ENCODE measurements at regions of chr3 and their contacts with region 1.

Region 1: DNA sequence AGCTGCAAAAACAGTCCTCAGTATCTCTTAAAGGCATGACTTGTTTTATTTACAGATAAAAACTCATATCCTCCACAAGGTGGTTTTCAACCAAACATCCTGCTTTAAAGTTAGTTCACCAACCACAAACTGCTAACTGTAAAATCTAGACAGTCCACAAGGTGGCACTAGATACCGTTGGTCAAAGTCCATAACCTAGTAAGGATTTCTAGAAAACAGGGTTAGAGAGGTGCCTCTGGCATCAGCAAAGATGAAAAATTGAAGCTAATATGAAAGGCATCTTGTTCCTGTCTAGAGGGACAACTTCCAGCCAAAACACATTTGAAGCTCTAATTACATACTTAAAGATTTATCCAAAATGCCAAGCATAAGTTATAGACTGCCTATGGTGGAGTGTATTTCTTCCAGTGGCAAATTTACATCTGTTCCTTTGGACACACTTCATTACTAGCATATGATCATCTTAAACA is 56.0 kb downstream of the ZMAT3 start:
- DNase-seq: peak in 12 of 14 experiments; percentile 6 to 90 (median 58)
- ATAC-seq: peak; percentile 98
- H3K4me3 ChIP-seq: no peak overlapping the region
- H3K4me3 Mint-ChIP-seq: no peak overlapping the region
- H3K27ac ChIP-seq: no peak overlapping the region
- H3K27ac Mint-ChIP-seq: peak overlapping the region; percentile 31
- H3K4me1 ChIP-seq: peaks cover 4% of the 10 kb centered on the region
- H3K4me1 Mint-ChIP-seq: peaks cover 45% of the 10 kb centered on the region
- H3K27me3 ChIP-seq: no peaks in the 10 kb centered on the region
- H3K27me3 Mint-ChIP-seq: no peaks in the 10 kb centered on the region
- CTCF ChIP-seq: peak; percentile 88

Region 2: DNA sequence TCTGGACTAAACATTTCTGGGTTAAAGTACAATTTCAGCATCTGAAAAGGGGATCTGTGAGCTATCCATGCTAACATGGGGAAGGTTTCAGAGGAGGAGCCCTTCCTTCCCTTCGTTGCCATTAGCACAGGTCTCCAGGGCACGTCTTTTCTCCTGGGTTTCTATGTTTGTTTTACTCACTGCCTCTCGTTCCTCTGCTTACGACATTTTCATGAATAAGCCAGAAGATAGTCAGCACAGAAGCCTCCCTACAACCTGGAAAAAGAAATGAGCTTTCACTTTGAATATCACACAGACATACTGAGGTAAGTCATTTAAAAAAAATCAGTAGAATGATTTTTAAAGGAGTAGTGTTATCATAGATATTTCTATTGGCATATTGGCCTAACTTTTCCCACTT is 596.5 kb before region 1 on chr3:
- CTCF ChIA-PET with region 1: no interaction called
- POLR2A ChIA-PET with region 1: no interaction called
- intact Hi-C with region 1: no loop called
- DNase-seq: no peak
- ATAC-seq: no peak
- H3K4me3 ChIP-seq: no peak overlapping the region
- H3K4me3 Mint-ChIP-seq: no peak overlapping the region
- H3K27ac ChIP-seq: no peak overlapping the region
- H3K27ac Mint-ChIP-seq: no peak overlapping the region
- H3K4me1 ChIP-seq: no peaks in the 10 kb centered on the region
- H3K4me1 Mint-ChIP-seq: no peaks in the 10 kb centered on the region
- H3K27me3 ChIP-seq: no peaks in the 10 kb centered on the region
- H3K27me3 Mint-ChIP-seq: no peaks in the 10 kb centered on the region
- CTCF ChIP-seq: no peak

Region 3: GRCh38 chr3:178465260-178466180 is 550.1 kb before region 1 on chr3:
- CTCF ChIA-PET with region 1: no interaction called
- POLR2A ChIA-PET with region 1: no interaction called
- intact Hi-C with region 1: no loop called
- DNase-seq: no peak
- ATAC-seq: no peak
- H3K4me3 ChIP-seq: no peak overlapping the region
- H3K4me3 Mint-ChIP-seq: no peak overlapping the region
- H3K27ac ChIP-seq: no peak overlapping the region
- H3K27ac Mint-ChIP-seq: no peak overlapping the region
- H3K4me1 ChIP-seq: no peaks in the 10 kb centered on the region
- H3K4me1 Mint-ChIP-seq: no peaks in the 10 kb centered on the region
- H3K27me3 ChIP-seq: no peaks in the 10 kb centered on the region
- H3K27me3 Mint-ChIP-seq: peaks cover 40% of the 10 kb centered on the region
- CTCF ChIP-seq: no peak

Region 4: DNA sequence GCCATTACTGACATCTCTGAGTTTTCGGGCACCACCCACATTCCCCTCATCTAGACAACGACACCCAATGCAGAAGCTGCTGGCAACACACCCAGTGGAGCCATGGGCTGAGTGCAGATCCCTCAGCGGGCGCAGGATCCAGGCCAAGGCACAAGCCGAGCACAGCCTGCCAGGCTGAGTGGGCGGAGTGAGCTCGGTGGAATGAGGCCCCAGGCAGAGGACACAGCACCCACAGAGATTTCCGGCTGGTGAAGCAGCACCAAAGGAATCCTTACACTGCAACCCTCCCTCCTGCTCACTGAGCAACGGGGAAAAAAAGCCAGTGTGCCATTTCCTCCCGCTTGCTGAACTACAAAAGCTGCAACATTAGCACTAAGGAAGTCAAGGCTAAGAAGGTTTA is 21.8 kb after region 1 on chr3:
- CTCF ChIA-PET with region 1: interaction called, 3 read pairs
- POLR2A ChIA-PET with region 1: interaction called, 7 read pairs
- intact Hi-C with region 1: loop called in 1 of 2 experiments (anchors 1 kb)
- DNase-seq: peak; percentile 27 to 78 (median 55)
- ATAC-seq: peak; percentile 95
- H3K4me3 ChIP-seq: peak overlapping the region; percentile 28
- H3K4me3 Mint-ChIP-seq: peak overlapping the region; percentile 73
- H3K27ac ChIP-seq: peak overlapping the region; percentile 47 to 63
- H3K27ac Mint-ChIP-seq: no peak overlapping the region
- H3K4me1 ChIP-seq: peaks cover 28% of the 10 kb centered on the region
- H3K4me1 Mint-ChIP-seq: peaks cover 12% of the 10 kb centered on the region
- H3K27me3 ChIP-seq: no peaks in the 10 kb centered on the region
- H3K27me3 Mint-ChIP-seq: no peaks in the 10 kb centered on the region
- CTCF ChIP-seq: no peak

Region 5: DNA sequence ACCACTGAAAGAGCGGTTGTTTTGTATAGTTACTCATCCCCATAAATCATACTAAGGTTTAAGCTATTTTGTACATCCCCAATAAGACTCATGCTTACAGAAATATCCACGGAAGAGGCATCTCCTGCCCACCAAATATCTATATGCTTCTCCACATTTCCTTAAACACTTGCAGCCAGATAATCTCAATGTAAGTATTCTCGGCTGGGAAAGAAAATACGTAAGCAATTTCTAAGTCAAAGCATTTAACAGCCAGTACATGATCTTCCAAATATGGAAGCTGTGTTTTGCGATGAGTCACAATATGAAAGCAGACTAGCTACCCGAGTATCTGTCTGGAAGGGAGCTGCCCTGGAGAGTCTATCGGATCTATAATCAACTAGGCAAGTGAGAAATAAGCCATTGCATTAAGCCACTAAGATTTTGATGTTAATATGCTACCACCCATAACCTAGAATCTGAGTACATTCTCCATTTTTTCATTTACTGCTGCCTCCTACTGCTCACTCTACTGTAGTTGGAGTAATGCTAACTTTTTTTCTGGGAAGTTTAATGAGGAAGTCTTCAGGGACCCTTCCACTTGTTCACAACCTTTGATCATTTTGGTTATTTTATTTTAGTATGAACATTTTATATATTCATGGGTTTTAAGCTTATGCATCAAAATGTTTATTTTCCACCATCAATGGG is 82.9 kb after region 1 on chr3:
- CTCF ChIA-PET with region 1: interaction called, 3 read pairs
- POLR2A ChIA-PET with region 1: interaction called, 4 read pairs
- intact Hi-C with region 1: loop called in 1 of 2 experiments (anchors 5 kb)
- DNase-seq: no peak
- ATAC-seq: no peak
- H3K4me3 ChIP-seq: no peak overlapping the region
- H3K4me3 Mint-ChIP-seq: no peak overlapping the region
- H3K27ac ChIP-seq: no peak overlapping the region
- H3K27ac Mint-ChIP-seq: no peak overlapping the region
- H3K4me1 ChIP-seq: no peaks in the 10 kb centered on the region
- H3K4me1 Mint-ChIP-seq: no peaks in the 10 kb centered on the region
- H3K27me3 ChIP-seq: no peaks in the 10 kb centered on the region
- H3K27me3 Mint-ChIP-seq: no peaks in the 10 kb centered on the region
- CTCF ChIP-seq: no peak

Region 6: DNA sequence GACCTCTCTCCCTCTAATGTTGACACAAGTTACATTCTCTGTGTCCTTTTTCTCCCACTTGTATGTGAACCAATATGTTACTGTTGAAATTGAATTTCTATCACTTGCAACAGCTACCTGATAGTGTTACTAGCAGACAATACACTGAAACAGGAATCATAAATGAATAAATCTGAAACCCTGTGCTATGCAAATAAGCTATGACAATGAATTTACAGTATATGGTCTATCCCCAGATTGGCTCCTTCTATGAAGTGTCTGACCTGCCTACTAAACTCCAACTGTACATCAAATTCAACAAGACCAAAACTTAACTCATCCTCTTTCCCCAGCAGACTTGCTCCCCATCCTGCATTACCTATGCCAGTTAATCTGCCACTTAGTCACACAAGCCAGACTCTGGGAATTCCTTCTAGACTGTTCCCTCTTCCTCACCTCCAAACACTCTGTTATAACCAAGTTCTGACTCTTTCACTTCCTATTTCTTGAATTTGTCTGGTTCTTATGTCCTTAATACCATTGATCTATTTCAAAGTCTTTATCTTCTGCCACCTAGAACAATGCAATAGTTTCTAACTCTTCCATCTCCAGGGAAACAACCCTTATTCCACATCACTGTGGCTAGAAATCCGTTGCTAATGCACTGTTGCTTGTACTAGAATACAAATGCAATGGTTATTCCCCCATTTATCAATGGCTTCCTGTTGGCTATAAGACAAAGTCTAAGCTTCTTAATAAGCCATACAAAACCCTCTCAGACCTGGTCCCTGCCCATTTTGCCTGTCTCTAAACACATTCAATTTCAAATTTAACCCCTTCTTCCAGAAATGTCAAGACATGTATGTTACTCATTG is 293.9 kb after region 1 on chr3:
- CTCF ChIA-PET with region 1: interaction called, 24 read pairs
- POLR2A ChIA-PET with region 1: no interaction called
- intact Hi-C with region 1: no loop called
- DNase-seq: no peak
- ATAC-seq: no peak
- H3K4me3 ChIP-seq: no peak overlapping the region
- H3K4me3 Mint-ChIP-seq: no peak overlapping the region
- H3K27ac ChIP-seq: no peak overlapping the region
- H3K27ac Mint-ChIP-seq: no peak overlapping the region
- H3K4me1 ChIP-seq: no peaks in the 10 kb centered on the region
- H3K4me1 Mint-ChIP-seq: no peaks in the 10 kb centered on the region
- H3K27me3 ChIP-seq: no peaks in the 10 kb centered on the region
- H3K27me3 Mint-ChIP-seq: no peaks in the 10 kb centered on the region
- CTCF ChIP-seq: no peak

Measured in CD4-positive, alpha-beta T cell (primary cell).